ENCODE measurements at regions of chr1 and their contacts with region 1.

Region 1: GRCh38 chr1:65419681-65420589 is 533 bp upstream of the LEPR start:
- DNase-seq: peak; percentile 89 to 98 (median 94)
- H3K4me3 ChIP-seq: peak overlapping the region; percentile 59 to 99 (median 90)
- H3K27ac ChIP-seq: peak overlapping the region; percentile 69 to 100 (median 97)
- H3K27me3 ChIP-seq: no peaks in the 10 kb centered on the region
- CTCF ChIP-seq: peak in 4 of 56 donors; percentile 7 to 27 (median 10)

Region 2: DNA sequence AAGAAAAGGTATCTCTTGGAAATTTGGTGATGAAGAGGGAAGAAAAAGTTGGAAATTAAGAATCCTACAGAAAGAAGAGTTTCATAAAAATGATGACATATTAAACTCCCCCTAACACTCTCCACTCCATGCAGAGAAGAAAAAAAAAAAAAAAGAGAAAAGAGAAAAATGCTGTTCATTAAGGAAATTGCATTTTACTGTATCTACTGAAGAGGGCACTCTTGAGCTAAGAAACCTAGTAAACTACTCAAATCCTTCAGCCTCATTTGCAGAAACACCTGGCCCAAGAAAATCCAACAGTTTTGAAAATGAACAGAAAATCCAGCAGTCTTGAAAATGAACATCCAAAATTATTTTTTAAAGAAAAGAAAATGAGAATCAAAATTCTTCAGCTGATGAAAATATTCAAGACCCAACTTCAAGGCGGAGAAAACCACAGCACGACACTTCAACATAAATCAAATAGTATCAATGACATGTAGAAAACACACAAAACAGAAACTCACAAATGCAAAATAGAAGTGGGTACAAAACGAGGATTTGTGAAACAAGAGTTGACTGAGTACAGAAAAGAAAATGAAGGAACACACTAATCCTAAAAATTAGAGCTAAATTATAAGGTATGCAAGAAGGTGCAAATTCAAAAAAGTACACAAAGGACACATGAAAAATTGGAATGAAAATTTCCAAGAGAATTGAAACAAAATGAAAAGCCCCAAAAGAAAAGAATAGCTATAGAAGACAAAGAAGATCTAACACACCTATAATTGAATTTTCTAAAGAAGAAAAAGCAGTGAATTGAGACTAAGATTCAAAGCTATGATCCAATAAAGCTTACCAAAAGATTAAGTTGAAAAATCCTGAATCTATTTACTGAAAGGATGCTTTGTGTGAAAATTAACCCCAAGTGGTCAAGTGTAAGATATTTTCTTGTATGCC is 183.8 kb before region 1 on chr1:
- intact Hi-C with region 1: loop called in 1 of 2 experiments (anchors 5 kb)
- DNase-seq: no peak
- H3K4me3 ChIP-seq: no peak overlapping the region
- H3K27ac ChIP-seq: peak overlapping the region in 2 of 59 donors; percentile 18 to 20
- H3K27me3 ChIP-seq: no peaks in the 10 kb centered on the region
- CTCF ChIP-seq: peak; percentile 43 to 86 (median 72)

Region 3: GRCh38 chr1:65254319-65255034 is 165.5 kb before region 1 on chr1:
- intact Hi-C with region 1: loop called in 1 of 2 experiments (anchors 2 kb)
- DNase-seq: peak; percentile 66 to 93 (median 84)
- H3K4me3 ChIP-seq: peak overlapping the region; percentile 69 to 99 (median 92)
- H3K27ac ChIP-seq: peak overlapping the region; percentile 82 to 100 (median 98)
- H3K27me3 ChIP-seq: no peaks in the 10 kb centered on the region
- CTCF ChIP-seq: peak in 24 of 56 donors; percentile 7 to 53 (median 28)

Region 4: GRCh38 chr1:65265651-65266351 is 154.1 kb before region 1 on chr1:
- intact Hi-C with region 1: loop called in 1 of 2 experiments (anchors 1 kb)
- DNase-seq: peak; percentile 45 to 76 (median 70)
- H3K4me3 ChIP-seq: peak overlapping the region; percentile 30 to 86 (median 73)
- H3K27ac ChIP-seq: peak overlapping the region; percentile 40 to 100 (median 96)
- H3K27me3 ChIP-seq: no peaks in the 10 kb centered on the region
- CTCF ChIP-seq: peak in 48 of 56 donors; percentile 9 to 65 (median 42)

Region 5: GRCh38 chr1:65309304-65310077 is 110.4 kb before region 1 on chr1 and contains the start of gene DNAJC6:
- intact Hi-C with region 1: loop called (anchors 10 kb)
- DNase-seq: peak in 9 of 10 donors; percentile 25 to 80 (median 57)
- H3K4me3 ChIP-seq: peak within 1 kb of the TSS; percentile 8 to 76 (median 62)
- H3K27ac ChIP-seq: peak within 1 kb of the TSS in 57 of 59 donors; percentile 18 to 98 (median 73)
- H3K27me3 ChIP-seq: no peaks in the 10 kb centered on the region
- CTCF ChIP-seq: peak in 3 of 56 donors; percentile 8 to 15 (median 14)
- total RNA-seq, gene DNAJC6: 149 to 406 (median 315) TPM

Region 6: GRCh38 chr1:65323246-65323645 is 96.7 kb before region 1 on chr1:
- intact Hi-C with region 1: loop called in 1 of 2 experiments (anchors 5 kb)
- DNase-seq: no peak
- H3K4me3 ChIP-seq: no peak overlapping the region
- H3K27ac ChIP-seq: peak overlapping the region in 40 of 59 donors; percentile 3 to 100 (median 91)
- H3K27me3 ChIP-seq: no peaks in the 10 kb centered on the region
- CTCF ChIP-seq: no peak